Transverse colon (tissue), 4 donors: ENCODE measurements at regions of chr10 and their contacts with region 1.

Region 1: GRCh38 chr10:68560186-68560942 is at the start of gene TET1:
- DNase-seq: peak; percentile 63
- H3K4me3 ChIP-seq: peak within 1 kb of the TSS; percentile 49 to 80 (median 71)
- H3K27ac ChIP-seq: peak within 1 kb of the TSS; percentile 23 to 53 (median 42)
- H3K4me1 ChIP-seq: peaks cover 0 to 18% (median 16%) of the 10 kb centered on the region in 4 donors
- H3K27me3 ChIP-seq: peaks cover 44% of the 10 kb centered on the region
- CTCF ChIP-seq: no peak
- EP300 ChIP-seq: no peak
- POLR2A ChIP-seq: peak; percentile 43
- total RNA-seq, gene TET1: 1.5 to 3.3 (median 1.5) TPM

Region 2: DNA sequence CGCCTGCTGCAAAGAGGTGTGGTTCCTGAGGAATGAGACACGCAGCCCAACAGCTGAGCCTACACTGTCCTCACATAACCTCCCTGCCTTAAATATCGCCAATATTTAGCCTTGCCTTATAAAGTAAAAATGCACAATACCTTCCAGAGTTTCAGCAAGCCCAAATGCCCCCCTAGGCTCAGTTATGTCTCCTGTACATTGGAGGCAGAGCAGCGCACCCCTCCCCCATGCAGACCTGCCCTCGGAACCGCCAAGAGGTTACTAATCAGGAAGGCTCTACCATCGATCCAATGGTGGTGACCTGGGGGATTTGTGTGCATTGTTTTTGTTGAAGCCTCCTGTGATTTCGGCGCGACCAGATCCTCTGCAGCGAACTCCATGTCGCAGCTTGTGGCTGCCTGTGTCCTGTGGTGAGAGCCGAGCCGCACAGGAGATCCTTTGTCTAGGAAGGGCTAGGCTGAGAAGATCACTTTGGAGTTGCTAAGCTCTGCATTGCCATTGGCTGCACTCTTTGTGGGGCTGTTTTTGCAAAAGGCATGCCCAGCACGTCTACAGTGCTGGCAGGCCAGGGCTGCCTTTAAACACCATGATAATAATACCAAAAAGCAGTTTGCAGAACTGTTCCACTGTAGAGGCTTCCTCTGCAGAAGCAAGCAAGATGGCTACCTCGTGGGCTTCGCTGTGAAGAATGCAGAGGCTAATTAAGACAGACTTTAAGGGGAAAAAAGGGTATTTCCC is 39.8 kb after region 1 on chr10:
- in situ Hi-C with region 1: no loop called
- intact Hi-C with region 1: loop called (anchors 5 kb)
- DNase-seq: peak; percentile 66
- H3K4me3 ChIP-seq: peak overlapping the region; percentile 6 to 49 (median 31)
- H3K27ac ChIP-seq: peak overlapping the region; percentile 56 to 78 (median 69)
- H3K4me1 ChIP-seq: peaks cover 9 to 40% (median 33%) of the 10 kb centered on the region in 4 donors
- H3K27me3 ChIP-seq: no peaks in the 10 kb centered on the region
- CTCF ChIP-seq: no peak
- EP300 ChIP-seq: no peak
- POLR2A ChIP-seq: no peak

Region 3: DNA sequence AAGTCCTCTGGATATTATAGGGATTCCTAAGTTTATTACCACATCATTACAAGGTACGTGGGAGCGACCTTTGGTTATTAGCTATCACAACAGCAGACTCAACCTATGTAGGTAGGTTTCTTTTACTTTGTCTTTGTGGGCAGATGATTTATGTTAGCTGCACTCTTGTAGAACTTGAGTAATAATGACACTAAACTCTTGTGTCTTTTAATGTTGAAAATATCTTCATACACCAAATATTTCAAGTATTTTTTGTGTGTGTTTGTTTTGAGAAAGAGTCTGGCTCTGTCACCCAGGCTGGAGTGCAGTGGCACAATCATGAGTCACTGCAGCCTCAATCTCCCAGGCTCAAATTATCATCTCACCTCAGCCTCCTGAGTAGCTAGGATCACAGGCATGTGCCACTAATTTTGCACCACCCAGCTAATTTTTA is 600.5 kb after region 1 on chr10:
- in situ Hi-C with region 1: no loop called
- intact Hi-C with region 1: no loop called
- DNase-seq: no peak
- H3K4me3 ChIP-seq: no peak overlapping the region
- H3K27ac ChIP-seq: no peak overlapping the region
- H3K4me1 ChIP-seq: no peaks in the 10 kb centered on the region
- H3K27me3 ChIP-seq: no peaks in the 10 kb centered on the region
- CTCF ChIP-seq: no peak
- EP300 ChIP-seq: no peak
- POLR2A ChIP-seq: no peak